AG04450 (cell line): ENCODE measurements at regions of chr1 and their contacts with region 1.

Region 1: DNA sequence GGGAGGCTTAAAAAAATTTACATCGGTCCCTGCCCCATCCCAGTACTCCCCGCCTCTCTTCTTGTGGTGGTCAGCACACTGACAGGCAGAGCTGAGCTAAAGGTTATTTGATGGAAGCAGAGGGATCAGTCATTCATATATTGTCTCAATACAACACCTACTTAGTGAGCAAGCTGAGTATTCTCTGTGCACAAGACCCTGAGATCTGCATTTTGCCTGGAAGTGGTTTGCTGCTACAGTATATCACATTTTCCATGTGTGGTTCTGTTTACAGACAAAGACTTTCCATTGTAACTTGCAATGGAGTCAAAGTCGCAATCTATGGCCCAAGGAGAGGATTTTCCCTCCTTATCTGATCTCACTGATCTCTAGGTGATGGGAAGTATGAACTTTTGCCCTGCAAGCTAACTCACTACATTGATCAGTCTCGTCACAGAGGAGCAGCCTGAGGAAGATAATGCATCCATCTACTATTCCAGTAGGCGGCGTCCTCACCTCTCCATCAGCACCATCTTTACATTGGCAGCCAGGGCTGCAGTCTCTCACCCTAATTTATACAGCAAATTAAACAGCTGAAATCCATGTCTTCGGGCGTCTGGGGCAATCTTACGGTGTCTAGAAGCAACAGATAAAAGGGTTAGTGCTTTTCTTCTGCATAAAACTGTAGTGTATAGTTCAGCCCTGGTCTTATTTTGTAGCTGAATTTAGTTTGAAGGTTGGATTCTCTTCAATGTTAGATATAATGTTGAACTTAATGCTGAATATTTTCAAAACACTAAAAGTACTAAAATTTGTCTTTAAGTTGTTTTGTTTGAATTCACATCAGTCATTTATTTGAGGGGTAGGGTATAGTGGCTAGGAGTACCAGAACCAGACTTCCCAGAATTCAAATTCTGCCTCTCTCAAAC is 3.2 kb upstream of the TRAF5 start:
- DNase-seq: no peak
- H3K4me3 ChIP-seq: no peak overlapping the region
- H3K27ac ChIP-seq: no peak overlapping the region
- H3K27me3 ChIP-seq: no peaks in the 10 kb centered on the region
- CTCF ChIP-seq: peak; percentile 93

Region 2: DNA sequence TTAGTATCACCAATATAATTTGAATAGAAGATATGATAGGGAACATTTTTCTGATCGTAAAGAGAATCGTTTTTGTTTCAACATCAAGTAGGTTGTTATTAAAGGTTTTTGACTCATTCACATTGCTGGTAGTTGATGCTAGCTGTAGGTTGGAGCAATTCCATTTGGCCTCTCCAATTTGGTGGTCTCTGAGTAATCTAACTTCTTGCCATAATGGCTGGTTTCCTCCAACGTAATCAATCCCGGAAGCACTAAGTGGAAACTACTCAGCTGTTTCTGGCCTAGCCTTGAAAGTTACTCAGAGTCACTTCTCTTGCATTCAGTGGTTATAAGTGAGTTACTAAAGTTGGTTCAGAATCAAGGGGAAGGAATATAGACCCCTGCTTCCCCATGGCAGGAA is 38.2 kb before region 1 on chr1:
- CTCF ChIA-PET with region 1: interaction called, 10 read pairs
- POLR2A ChIA-PET with region 1: no interaction called
- DNase-seq: no peak
- H3K4me3 ChIP-seq: no peak overlapping the region
- H3K27ac ChIP-seq: no peak overlapping the region
- H3K27me3 ChIP-seq: no peaks in the 10 kb centered on the region
- CTCF ChIP-seq: no peak

Region 3: GRCh38 chr1:211309617-211310016 is 13.8 kb before region 1 on chr1:
- CTCF ChIA-PET with region 1: interaction called, 41 read pairs
- POLR2A ChIA-PET with region 1: no interaction called
- DNase-seq: no peak
- H3K4me3 ChIP-seq: no peak overlapping the region
- H3K27ac ChIP-seq: no peak overlapping the region
- H3K27me3 ChIP-seq: no peaks in the 10 kb centered on the region
- CTCF ChIP-seq: no peak

Region 4: DNA sequence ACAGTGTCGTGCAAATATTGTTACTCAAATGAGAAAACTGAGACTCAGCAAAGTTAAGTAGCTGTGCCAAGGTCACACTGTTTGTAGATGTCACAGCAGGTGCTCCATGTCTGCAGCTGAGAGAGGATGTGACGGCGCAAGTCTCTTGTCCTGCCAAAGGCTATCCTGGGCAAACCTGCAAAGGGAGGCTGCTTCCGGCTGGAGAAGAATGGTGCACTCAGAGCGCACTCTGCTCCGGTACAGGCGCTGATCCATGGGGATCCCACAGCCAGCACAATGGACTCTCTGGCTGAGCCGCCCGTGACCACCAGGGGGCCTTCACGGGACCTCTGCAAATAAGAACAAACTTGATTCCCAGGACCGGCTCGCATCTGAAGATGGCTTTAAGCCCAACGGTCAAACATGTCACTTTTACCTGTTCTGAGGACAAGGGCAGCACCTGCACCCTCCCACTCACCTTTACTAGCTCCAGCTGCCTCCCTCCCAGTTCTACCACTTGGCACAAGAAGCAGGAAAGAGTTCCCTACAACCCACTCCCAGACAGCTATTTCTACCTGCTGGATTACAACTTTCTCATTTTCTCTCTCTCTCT is 146.6 kb after region 1 on chr1:
- CTCF ChIA-PET with region 1: interaction called, 25 read pairs
- POLR2A ChIA-PET with region 1: no interaction called
- DNase-seq: peak; percentile 21
- H3K4me3 ChIP-seq: no peak overlapping the region
- H3K27ac ChIP-seq: no peak overlapping the region
- H3K27me3 ChIP-seq: peaks cover 24% of the 10 kb centered on the region
- CTCF ChIP-seq: peak; percentile 93

Region 5: DNA sequence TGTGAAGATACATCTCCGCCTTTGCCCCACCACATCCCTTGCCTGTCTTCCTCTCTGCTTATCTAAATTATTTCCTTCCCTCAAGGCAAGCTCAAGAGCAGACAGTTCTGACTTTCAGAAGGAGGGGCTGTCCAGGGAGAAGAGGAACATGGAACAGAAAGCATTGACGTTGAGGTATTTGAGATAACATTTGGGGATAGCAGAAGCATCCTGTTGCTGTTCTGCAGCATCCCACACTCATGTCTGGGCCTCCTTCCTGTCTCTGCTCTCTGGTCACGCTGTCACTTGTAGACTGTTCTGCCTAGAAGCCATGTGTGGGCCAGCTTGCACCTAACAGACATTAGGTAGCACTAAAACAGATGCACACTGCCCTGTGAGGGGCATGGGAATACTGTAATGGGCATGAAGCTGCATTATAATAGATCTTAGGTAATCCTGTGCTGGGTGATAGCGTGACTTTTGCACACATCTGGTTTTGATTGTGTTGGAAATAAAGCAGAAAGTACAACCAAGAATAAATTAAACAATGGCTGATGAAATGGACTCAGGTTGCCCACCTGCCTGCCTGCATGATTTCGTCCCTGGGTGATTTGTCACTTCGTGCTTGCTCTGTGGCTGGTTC is 169.2 kb after region 1 on chr1:
- CTCF ChIA-PET with region 1: no interaction called
- POLR2A ChIA-PET with region 1: no interaction called
- DNase-seq: no peak
- H3K4me3 ChIP-seq: no peak overlapping the region
- H3K27ac ChIP-seq: no peak overlapping the region
- H3K27me3 ChIP-seq: peaks cover 38% of the 10 kb centered on the region
- CTCF ChIP-seq: no peak

Region 6: GRCh38 chr1:211514030-211514754 is 190.8 kb after region 1 on chr1:
- CTCF ChIA-PET with region 1: interaction called, 69 read pairs
- POLR2A ChIA-PET with region 1: no interaction called
- DNase-seq: peak; percentile 62
- H3K4me3 ChIP-seq: no peak overlapping the region
- H3K27ac ChIP-seq: no peak overlapping the region
- H3K27me3 ChIP-seq: no peaks in the 10 kb centered on the region
- CTCF ChIP-seq: peak; percentile 81

Region 7: GRCh38 chr1:211667065-211667617 is 343.7 kb after region 1 on chr1:
- CTCF ChIA-PET with region 1: no interaction called
- POLR2A ChIA-PET with region 1: no interaction called
- DNase-seq: no peak
- H3K4me3 ChIP-seq: no peak overlapping the region
- H3K27ac ChIP-seq: no peak overlapping the region
- H3K27me3 ChIP-seq: no peaks in the 10 kb centered on the region
- CTCF ChIP-seq: no peak